ENCODE measurements at regions of chr5 and their contacts with region 1.

Region 1: DNA sequence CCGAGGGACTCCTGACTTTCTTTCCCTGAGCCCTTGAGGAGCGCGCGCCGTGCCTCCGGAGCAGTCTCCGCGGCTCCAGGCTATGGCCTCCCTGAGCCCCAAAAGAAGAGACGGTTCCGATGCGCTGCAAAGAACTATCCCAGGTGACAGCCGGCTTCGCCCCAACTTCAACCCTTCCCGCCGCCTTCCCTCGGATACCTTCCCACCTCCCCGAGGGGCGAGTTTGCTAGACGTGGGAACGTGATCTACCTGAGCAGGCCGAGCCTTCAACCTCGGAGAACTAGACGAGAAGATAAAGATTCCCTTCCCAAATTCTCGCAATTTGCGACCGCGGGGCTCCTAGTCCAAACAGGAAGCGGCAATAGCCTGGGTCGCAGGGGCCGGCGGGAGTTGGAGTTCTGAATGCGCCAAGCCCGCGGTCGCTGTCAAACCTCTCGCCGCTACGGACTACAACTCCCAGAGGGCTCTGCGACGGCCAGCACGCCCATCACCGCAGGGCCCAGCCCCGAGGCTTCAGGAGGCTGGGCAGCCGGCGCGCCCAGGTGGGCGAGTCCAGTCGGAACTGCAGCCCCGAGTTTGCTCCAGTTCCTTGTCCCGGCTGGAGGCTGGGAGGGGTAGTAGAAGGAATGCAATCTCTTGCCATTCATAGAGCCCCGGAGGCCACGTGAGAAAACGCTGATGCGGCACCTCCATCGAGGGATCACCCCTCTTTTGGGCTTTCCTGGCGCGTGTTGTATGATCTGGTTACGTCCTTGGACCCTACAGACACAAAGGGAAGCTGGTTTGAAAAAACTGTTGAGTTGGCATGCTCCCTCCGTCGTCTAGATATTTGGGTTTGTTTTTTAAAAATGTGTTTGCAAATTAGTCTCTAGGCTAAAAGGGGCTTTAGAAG is at the start of gene SLC38A9:
- DNase-seq: peak; percentile 89
- H3K4me3 Mint-ChIP-seq: peak within 1 kb of the TSS; percentile 99
- H3K27ac Mint-ChIP-seq: peak within 1 kb of the TSS; percentile 91
- H3K4me1 Mint-ChIP-seq: peaks cover 39% of the 10 kb centered on the region
- H3K27me3 Mint-ChIP-seq: no peaks in the 10 kb centered on the region
- total RNA-seq, gene SLC38A9: 22.9 and 25.7 TPM in 2 replicates

Region 2: GRCh38 chr5:55763746-55764420 is 51.7 kb after region 1 on chr5:
- intact Hi-C with region 1: loop called (anchors 5 kb)
- DNase-seq: no peak
- H3K4me3 Mint-ChIP-seq: peak overlapping the region; percentile 64
- H3K27ac Mint-ChIP-seq: peak overlapping the region; percentile 61
- H3K4me1 Mint-ChIP-seq: peaks cover 36% of the 10 kb centered on the region
- H3K27me3 Mint-ChIP-seq: peaks cover 3% of the 10 kb centered on the region

Region 3: GRCh38 chr5:55903121-55903701 is 191.0 kb after region 1 on chr5:
- intact Hi-C with region 1: loop called (anchors 2 kb)
- DNase-seq: peak; percentile 79
- H3K4me3 Mint-ChIP-seq: peak overlapping the region; percentile 55
- H3K27ac Mint-ChIP-seq: peak overlapping the region; percentile 78
- H3K4me1 Mint-ChIP-seq: peaks cover 67% of the 10 kb centered on the region
- H3K27me3 Mint-ChIP-seq: peaks cover 2% of the 10 kb centered on the region

Region 4: GRCh38 chr5:55923177-55923771 is 211.1 kb after region 1 on chr5:
- intact Hi-C with region 1: loop called (anchors 5 kb)
- DNase-seq: no peak
- H3K4me3 Mint-ChIP-seq: peak overlapping the region; percentile 82
- H3K27ac Mint-ChIP-seq: peak overlapping the region; percentile 79
- H3K4me1 Mint-ChIP-seq: peaks cover 41% of the 10 kb centered on the region
- H3K27me3 Mint-ChIP-seq: peaks cover 1% of the 10 kb centered on the region

Measured in activated T-helper 1 cell treated with anti-CD3 and anti-CD28 coated beads, Interleukin-12 subunit alpha, Interleukin-12 subunit beta, Interleukin-2, Interleukin-4 antibody, amounts not matched to agents 30 ng/mL and 10 ng/mL and 1 ng/mL, durations not matched to agents 14 hours and 24 hours and 36 hours (primary cell).